ENCODE measurements at regions of chr15 and their contacts with region 1.

Region 1: GRCh38 chr15:31365655-31366127 is 39.1 kb downstream of the KLF13 start:
- DNase-seq: peak; percentile 59 to 90 (median 74)
- ATAC-seq: peak; percentile 51
- H3K4me3 ChIP-seq: peak overlapping the region; percentile 31
- H3K4me3 Mint-ChIP-seq: peak overlapping the region; percentile 82
- H3K27ac ChIP-seq: peak overlapping the region; percentile 72 to 86
- H3K27ac Mint-ChIP-seq: peak overlapping the region; percentile 90
- H3K4me1 ChIP-seq: peaks cover 98% of the 10 kb centered on the region
- H3K4me1 Mint-ChIP-seq: peaks cover 98% of the 10 kb centered on the region
- H3K27me3 ChIP-seq: no peaks in the 10 kb centered on the region
- H3K27me3 Mint-ChIP-seq: no peaks in the 10 kb centered on the region
- CTCF ChIP-seq: peak; percentile 58

Region 2: DNA sequence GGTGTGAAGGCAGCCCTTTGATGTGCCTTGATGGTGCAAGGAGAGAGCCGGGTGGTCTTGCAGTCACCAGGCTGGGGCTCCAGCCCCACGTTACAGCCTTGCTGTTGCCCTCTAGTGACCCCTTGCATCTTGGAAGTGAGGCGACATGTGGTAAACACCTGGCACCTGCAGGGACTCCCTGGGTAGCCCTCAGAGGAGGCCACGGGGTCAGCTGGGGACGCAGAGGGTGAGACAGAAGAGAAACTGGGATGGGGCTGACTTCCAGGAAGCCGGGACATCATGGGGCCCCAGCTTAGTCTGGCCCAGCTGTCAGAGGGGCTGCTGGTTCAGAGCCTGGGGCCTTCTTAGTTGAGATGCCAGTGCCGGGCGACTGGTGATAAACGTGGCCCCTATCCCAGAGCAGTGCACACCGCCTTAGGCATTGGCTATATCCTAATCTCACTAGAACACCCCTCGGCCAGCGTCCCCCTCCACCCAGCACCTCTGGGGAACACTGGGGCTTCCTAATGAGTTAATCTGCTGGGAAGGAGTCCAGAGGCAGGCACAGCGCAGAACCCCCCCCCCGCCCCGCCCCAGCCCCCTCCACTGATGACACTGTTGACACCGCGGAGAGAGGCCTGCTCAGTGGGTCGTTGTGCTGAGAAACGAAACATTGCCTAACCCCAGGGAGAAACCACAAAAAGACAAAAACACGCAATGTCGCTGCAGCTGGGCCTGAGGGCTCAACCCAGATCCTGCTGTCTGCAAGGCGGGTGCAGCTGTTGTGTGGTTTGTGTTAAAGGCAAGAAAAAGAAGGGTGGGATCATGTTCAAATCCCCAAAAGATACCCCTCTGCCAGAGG is 99.6 kb before region 1 on chr15:
- CTCF ChIA-PET with region 1: no interaction called
- POLR2A ChIA-PET with region 1: interaction called, 29 read pairs
- intact Hi-C with region 1: loop called in 1 of 2 experiments (anchors 2 kb)
- DNase-seq: peak; percentile 58 to 90 (median 76)
- ATAC-seq: peak; percentile 86
- H3K4me3 ChIP-seq: no peak overlapping the region
- H3K4me3 Mint-ChIP-seq: peak overlapping the region; percentile 71
- H3K27ac ChIP-seq: peak overlapping the region; percentile 79 to 85
- H3K27ac Mint-ChIP-seq: peak overlapping the region; percentile 98
- H3K4me1 ChIP-seq: peaks cover 97% of the 10 kb centered on the region
- H3K4me1 Mint-ChIP-seq: peaks cover 98% of the 10 kb centered on the region
- H3K27me3 ChIP-seq: no peaks in the 10 kb centered on the region
- H3K27me3 Mint-ChIP-seq: no peaks in the 10 kb centered on the region
- CTCF ChIP-seq: no peak

Region 3: DNA sequence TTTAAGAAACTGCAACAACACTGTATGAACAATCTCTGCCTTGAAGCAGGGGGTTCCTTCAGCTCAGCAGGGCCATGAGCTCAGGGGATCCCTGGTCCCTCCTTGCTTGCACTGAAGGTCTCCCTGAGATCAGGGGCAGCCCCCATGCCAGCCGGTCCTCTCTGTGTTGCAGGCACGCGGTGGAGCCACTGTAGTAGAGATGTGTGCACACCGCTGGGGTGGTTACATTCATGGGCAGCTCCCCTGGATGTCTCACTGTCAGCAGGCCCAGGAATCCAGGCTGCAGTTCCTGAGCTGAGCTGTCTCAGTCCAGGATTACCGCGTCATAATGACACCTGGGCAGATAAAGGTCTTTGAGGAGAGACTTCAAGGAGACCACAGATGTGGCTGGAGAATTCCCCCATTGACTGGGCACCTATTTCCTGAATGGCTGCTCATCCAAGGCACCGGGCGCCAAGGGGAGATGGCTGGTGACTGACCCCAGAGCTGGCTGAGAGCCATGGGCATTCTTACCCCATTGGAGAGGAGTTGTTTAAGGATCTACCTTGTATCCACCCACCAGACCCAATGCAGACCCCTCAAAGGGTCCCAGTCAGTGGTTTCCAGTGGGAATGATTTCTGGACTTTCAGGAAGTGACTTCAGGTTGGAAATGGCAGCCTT is 49.4 kb before region 1 on chr15:
- CTCF ChIA-PET with region 1: no interaction called
- POLR2A ChIA-PET with region 1: no interaction called
- intact Hi-C with region 1: no loop called
- DNase-seq: peak in 1 of 14 experiments; percentile 25
- ATAC-seq: no peak
- H3K4me3 ChIP-seq: no peak overlapping the region
- H3K4me3 Mint-ChIP-seq: no peak overlapping the region
- H3K27ac ChIP-seq: no peak overlapping the region
- H3K27ac Mint-ChIP-seq: peak overlapping the region; percentile 70
- H3K4me1 ChIP-seq: peaks cover 29% of the 10 kb centered on the region
- H3K4me1 Mint-ChIP-seq: peaks cover 32% of the 10 kb centered on the region
- H3K27me3 ChIP-seq: peaks cover 0 to 3% of the 10 kb centered on the region in 2 experiments
- H3K27me3 Mint-ChIP-seq: no peaks in the 10 kb centered on the region
- CTCF ChIP-seq: no peak

Region 4: GRCh38 chr15:31344823-31345605 is 20.7 kb before region 1 on chr15:
- CTCF ChIA-PET with region 1: interaction called, 4 read pairs
- POLR2A ChIA-PET with region 1: interaction called, 275 read pairs
- intact Hi-C with region 1: loop called (anchors 2 kb)
- DNase-seq: peak in 3 of 14 experiments; percentile 46 to 50 (median 47)
- ATAC-seq: no peak
- H3K4me3 ChIP-seq: peak overlapping the region; percentile 47
- H3K4me3 Mint-ChIP-seq: peak overlapping the region; percentile 90
- H3K27ac ChIP-seq: peak overlapping the region; percentile 81 to 86
- H3K27ac Mint-ChIP-seq: peak overlapping the region; percentile 90
- H3K4me1 ChIP-seq: peaks cover 100% of the 10 kb centered on the region
- H3K4me1 Mint-ChIP-seq: peaks cover 100% of the 10 kb centered on the region
- H3K27me3 ChIP-seq: no peaks in the 10 kb centered on the region
- H3K27me3 Mint-ChIP-seq: no peaks in the 10 kb centered on the region
- CTCF ChIP-seq: no peak

Region 5: DNA sequence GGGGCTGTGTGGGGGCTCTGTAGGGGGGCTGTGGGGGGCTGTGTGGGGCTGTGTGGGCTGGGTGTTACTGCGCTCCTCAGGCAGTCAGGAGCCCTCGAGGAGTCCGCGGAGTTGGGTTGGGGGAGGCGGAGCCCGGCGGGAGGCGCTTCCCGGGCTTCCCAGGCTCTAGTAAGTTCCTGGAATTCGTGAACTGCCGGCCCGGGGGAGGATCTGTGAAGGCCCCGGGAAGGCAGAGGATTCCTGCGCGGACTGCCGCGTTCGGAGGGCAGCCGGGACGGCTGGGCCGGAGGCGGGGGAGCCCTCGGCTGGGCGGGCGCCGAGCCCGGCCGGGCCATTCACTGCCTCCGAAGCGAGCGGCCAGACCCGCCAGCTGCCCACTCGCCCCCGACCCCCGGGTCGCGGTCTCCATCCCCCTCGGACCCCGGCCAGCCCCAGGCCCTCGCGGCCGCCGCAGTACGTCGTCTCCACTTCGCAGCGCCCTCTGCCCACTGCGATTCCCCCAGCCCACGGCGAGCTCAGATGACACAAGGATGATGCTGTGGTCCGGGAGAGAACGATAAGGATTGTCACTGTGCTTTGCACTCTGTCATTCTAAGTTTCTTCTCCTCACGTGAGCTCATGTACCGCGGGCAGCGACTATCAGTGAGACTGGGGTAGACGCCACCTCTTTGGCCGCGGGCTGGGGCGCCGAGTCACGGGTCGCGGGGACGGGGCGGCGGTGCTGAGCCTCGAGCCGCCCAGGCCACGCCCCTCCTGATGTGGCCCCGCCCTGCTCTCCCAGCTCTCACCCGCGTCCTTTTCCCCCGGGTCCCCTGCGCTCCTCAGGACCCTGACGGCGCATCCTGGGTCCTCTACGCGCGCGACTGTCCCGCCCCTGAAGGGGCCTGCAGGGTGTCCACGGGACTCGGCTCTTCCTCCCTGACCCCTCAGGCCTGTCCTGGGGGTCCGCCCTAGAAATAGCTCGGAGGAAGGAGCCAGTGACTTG is 26.3 kb after region 1 on chr15:
- CTCF ChIA-PET with region 1: interaction called, 13 read pairs
- POLR2A ChIA-PET with region 1: interaction called, 20 read pairs
- intact Hi-C with region 1: loop called (anchors 2 kb)
- DNase-seq: peak; percentile 65 to 93 (median 82)
- ATAC-seq: peak; percentile 87
- H3K4me3 ChIP-seq: peak overlapping the region; percentile 75
- H3K4me3 Mint-ChIP-seq: peak overlapping the region; percentile 95
- H3K27ac ChIP-seq: peak overlapping the region; percentile 8 to 37
- H3K27ac Mint-ChIP-seq: peak overlapping the region; percentile 86
- H3K4me1 ChIP-seq: peaks cover 51% of the 10 kb centered on the region
- H3K4me1 Mint-ChIP-seq: peaks cover 52% of the 10 kb centered on the region
- H3K27me3 ChIP-seq: no peaks in the 10 kb centered on the region
- H3K27me3 Mint-ChIP-seq: no peaks in the 10 kb centered on the region
- CTCF ChIP-seq: no peak

Region 6: GRCh38 chr15:31448635-31448979 is 82.9 kb after region 1 on chr15:
- CTCF ChIA-PET with region 1: no interaction called
- POLR2A ChIA-PET with region 1: no interaction called
- intact Hi-C with region 1: no loop called
- DNase-seq: no peak
- ATAC-seq: no peak
- H3K4me3 ChIP-seq: no peak overlapping the region
- H3K4me3 Mint-ChIP-seq: no peak overlapping the region
- H3K27ac ChIP-seq: no peak overlapping the region
- H3K27ac Mint-ChIP-seq: no peak overlapping the region
- H3K4me1 ChIP-seq: peaks cover 14% of the 10 kb centered on the region
- H3K4me1 Mint-ChIP-seq: peaks cover 9% of the 10 kb centered on the region
- H3K27me3 ChIP-seq: no peaks in the 10 kb centered on the region
- H3K27me3 Mint-ChIP-seq: no peaks in the 10 kb centered on the region
- CTCF ChIP-seq: no peak

Region 7: DNA sequence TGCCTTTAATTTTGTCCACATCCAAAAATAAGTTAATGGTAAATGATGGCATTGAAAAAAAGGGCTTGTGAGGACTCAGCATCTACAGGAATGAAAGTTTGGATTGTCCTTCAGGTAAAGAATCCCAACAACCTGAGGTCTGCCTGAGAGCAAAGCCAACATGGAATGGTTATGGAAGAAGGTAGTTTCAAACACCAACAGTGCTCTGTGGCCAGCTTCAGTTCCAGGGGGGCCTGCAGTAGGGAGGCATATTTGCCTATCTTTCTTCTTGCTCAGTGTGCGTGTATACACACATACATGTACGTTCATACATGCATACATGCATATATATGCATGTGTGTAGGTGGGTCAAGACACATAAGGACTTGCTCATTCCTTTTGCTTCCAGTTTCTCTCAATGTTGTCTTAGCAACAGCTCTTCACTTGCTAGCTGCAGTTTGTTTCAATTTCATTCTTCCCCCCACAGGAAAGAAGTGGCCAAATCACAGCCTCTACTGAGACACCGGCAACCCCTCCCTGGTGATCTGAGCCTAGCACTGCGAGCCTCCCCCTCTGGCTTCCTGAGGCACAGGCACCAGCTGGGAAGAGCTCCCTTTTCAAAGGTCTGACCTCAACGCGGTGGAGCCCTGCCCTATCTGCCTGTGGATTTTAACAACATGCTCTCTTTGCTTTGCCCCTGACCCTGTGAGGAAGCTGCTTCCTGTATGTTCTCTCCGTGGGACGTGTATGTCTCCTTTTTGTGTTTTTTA is 107.1 kb after region 1 on chr15:
- CTCF ChIA-PET with region 1: interaction called, 6 read pairs
- POLR2A ChIA-PET with region 1: interaction called, 16 read pairs
- intact Hi-C with region 1: no loop called
- DNase-seq: peak in 13 of 14 experiments; percentile 28 to 86 (median 43)
- ATAC-seq: peak; percentile 91
- H3K4me3 ChIP-seq: peak overlapping the region; percentile 46
- H3K4me3 Mint-ChIP-seq: peak overlapping the region; percentile 67
- H3K27ac ChIP-seq: peak overlapping the region; percentile 55 to 69
- H3K27ac Mint-ChIP-seq: peak overlapping the region; percentile 83
- H3K4me1 ChIP-seq: peaks cover 57% of the 10 kb centered on the region
- H3K4me1 Mint-ChIP-seq: peaks cover 45% of the 10 kb centered on the region
- H3K27me3 ChIP-seq: no peaks in the 10 kb centered on the region
- H3K27me3 Mint-ChIP-seq: no peaks in the 10 kb centered on the region
- CTCF ChIP-seq: no peak

Region 8: DNA sequence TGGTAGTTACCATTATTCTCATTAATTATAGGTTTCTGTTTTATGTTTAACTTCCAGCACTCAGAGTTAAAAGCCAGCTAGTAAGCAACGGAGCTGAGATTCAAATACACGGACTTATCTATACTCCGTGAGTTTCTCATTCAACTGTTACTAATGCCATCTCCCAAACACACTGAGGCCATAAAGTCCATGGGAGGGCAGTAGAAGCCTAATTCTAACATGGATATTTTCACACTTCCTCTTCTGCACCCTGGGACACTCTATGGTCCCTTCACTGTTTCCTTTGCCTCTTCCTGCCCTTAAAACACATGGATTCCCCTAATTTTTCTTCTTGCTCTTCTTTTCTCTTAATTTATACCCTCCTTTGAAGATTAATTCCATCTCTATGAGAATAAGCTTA is 206.0 kb after region 1 on chr15:
- CTCF ChIA-PET with region 1: no interaction called
- POLR2A ChIA-PET with region 1: no interaction called
- intact Hi-C with region 1: no loop called
- DNase-seq: no peak
- ATAC-seq: no peak
- H3K4me3 ChIP-seq: no peak overlapping the region
- H3K4me3 Mint-ChIP-seq: no peak overlapping the region
- H3K27ac ChIP-seq: no peak overlapping the region
- H3K27ac Mint-ChIP-seq: no peak overlapping the region
- H3K4me1 ChIP-seq: no peaks in the 10 kb centered on the region
- H3K4me1 Mint-ChIP-seq: no peaks in the 10 kb centered on the region
- H3K27me3 ChIP-seq: no peaks in the 10 kb centered on the region
- H3K27me3 Mint-ChIP-seq: peaks cover 18% of the 10 kb centered on the region
- CTCF ChIP-seq: no peak

Region 9: DNA sequence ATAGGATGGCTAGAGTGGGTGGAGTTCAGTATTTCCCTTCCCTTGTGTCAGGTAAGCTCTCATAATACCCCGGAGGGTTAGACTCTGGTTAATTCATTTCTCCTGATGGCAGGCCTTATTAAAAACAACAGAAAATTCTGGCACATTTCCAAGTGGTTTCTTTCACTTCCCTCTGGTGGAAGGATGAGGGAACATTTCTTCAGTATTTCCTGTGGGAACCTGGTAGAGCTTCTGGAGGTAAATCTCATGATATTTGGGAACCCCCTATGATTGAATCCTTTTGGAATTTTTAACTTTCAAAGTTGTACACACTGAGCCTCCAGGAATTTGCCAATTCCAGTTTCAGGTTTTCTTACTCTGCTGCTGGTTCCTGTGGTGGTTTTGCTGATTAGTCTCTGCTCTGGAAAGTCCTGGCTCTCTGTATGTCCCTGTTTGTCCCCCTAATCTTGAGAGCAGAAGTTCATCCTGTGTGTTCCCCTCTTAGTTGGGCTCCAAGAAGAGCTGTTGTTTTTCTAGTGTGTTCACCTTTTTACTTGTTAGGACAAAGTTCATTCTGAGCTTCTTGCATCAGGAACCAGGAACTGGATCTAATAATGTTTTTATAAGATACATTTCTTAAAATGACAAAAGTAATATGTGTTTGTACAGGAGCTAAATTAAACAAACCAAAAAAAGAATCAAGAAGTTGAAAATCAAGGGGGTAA is 676.7 kb after region 1 on chr15:
- CTCF ChIA-PET with region 1: no interaction called
- POLR2A ChIA-PET with region 1: no interaction called
- intact Hi-C with region 1: no loop called
- DNase-seq: no peak
- ATAC-seq: no peak
- H3K4me3 ChIP-seq: no peak overlapping the region
- H3K4me3 Mint-ChIP-seq: no peak overlapping the region
- H3K27ac ChIP-seq: no peak overlapping the region
- H3K27ac Mint-ChIP-seq: no peak overlapping the region
- H3K4me1 ChIP-seq: no peaks in the 10 kb centered on the region
- H3K4me1 Mint-ChIP-seq: no peaks in the 10 kb centered on the region
- H3K27me3 ChIP-seq: peaks cover 6 to 12% of the 10 kb centered on the region in 2 experiments
- H3K27me3 Mint-ChIP-seq: peaks cover 34% of the 10 kb centered on the region
- CTCF ChIP-seq: no peak

Measured in CD4-positive, alpha-beta T cell (primary cell).